HCT116 (cell line): ENCODE measurements at regions of chr22 and their contacts with region 1.

Region 1: DNA sequence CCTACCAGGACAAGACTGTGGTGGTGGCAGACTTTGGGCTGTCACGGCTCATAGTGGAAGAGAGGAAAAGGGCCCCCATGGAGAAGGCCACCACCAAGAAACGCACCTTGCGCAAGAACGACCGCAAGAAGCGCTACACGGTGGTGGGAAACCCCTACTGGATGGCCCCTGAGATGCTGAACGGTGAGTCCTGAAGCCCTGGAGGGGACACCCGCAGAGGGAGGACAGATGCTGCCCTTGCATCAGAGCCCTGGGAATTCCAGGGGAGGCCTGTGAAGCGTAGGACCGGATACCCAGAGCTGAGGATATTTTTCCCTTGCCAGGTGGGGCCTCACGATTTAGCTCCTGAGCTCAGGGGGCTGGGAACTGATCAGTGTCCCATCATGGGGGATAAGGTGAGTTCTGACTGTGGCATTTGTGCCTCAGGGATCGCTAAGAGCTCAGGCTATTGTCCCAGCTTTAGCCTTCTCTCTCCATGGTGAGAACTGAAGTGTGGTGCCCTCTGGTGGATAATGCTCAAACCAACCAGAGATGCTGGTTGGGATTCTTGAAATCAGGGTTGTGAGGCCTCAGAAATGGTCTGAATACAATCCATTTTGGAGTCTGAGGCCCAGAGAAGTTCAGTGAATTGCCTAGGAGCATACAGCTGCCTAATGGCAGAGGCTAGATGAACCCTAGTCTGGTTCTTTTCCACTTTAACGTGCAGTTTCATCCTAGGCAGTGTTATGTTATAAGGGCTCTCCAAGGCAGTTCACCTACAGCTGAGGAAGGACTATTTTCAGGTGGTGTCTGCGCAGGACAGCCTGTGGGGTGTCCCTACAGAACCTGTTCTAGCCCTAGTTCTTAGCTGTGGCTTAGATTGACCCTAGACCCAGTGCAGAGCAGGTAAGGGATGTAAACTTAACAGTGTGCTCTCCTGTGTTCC is 19.5 kb downstream of the PIK3IP1 start:
- DNase-seq: peak; percentile 32
- ATAC-seq: peak; percentile 88
- H3K4me3 ChIP-seq: no peak overlapping the region
- H3K27ac ChIP-seq: 0 out of 2 replicates have a peak overlapping the region, but pooled peaks have one; percentile 22
- H3K4me1 ChIP-seq: no peaks in the 10 kb centered on the region
- H3K27me3 ChIP-seq: no peaks in the 10 kb centered on the region
- CTCF ChIP-seq: peak; percentile 69 to 80 (median 77)
- POLR2A ChIP-seq: no peak
- RAD21 ChIP-seq: peak; percentile 76

Region 2: GRCh38 chr22:31211862-31212730 is 60.7 kb before region 1 on chr22 and contains the start of gene LIMK2:
- CTCF ChIA-PET with region 1: interaction called, 9 read pairs
- POLR2A ChIA-PET with region 1: no interaction called
- RAD21 ChIA-PET with region 1: interaction called, 3 read pairs
- intact Hi-C with region 1: loop called (anchors 5 kb)
- DNase-seq: peak; percentile 76
- ATAC-seq: peak; percentile 98
- H3K4me3 ChIP-seq: peak within 1 kb of the TSS; percentile 77 to 97
- H3K27ac ChIP-seq: peak within 1 kb of the TSS; percentile 73
- H3K4me1 ChIP-seq: peaks cover 11 to 15% of the 10 kb centered on the region in 2 experiments; a peak in 3 of 4 replicates
- H3K27me3 ChIP-seq: no peaks in the 10 kb centered on the region
- CTCF ChIP-seq: peak; percentile 79 to 84 (median 82)
- POLR2A ChIP-seq: no peak
- RAD21 ChIP-seq: peak; percentile 77
- total RNA-seq, gene LIMK2: 21.9 TPM

Region 3: DNA sequence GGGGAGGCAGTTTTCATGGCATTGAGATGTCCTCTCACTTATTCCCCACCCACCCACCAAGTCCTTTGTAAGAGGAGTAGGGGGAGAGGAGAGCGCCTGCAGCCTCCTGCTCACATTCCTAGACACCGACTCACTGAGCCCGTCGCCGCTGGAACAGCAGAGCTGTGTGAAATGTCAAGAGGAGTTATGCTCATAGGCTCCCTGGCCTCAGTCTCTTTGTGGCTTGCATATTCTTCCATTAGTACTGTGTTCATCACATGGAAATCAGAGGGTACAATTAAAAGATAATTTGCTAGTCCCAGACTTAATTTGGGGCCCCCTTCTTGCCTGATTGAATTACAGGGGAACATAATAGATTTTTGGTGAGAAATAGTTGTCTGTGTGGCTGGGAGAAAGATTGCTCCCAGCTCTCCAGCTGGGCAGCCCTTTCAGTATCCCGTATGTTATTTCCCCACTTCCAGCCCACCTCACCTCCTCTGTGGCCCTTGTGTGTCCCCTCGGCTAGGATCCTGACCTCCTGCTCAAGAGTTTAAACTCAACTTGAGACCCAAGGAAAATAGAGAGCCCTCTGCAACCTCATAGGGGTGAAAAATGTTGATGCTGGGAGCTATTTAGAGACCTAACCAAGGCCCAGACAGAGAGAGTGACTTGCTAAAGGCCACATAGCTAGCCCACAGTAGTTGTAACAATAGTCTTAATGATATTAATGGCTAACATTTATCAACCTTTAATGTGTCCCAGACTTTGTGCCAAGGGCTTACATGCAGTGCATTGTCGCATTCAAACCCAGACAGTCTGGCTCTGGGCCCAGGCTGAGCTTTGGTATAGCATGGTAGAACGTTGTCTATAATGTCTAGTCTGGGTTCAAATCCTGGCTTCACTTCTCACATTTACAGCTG is 28.5 kb before region 1 on chr22:
- CTCF ChIA-PET with region 1: interaction called, 11 read pairs
- POLR2A ChIA-PET with region 1: interaction called, 3 read pairs
- RAD21 ChIA-PET with region 1: interaction called in 1 of 2 experiments, 3 read pairs
- intact Hi-C with region 1: no loop called
- DNase-seq: peak; percentile 33
- ATAC-seq: peak; percentile 85
- H3K4me3 ChIP-seq: peak overlapping the region; percentile 37 to 46
- H3K27ac ChIP-seq: peak overlapping the region; percentile 60
- H3K4me1 ChIP-seq: peaks cover 47 to 60% of the 10 kb centered on the region in 2 experiments
- H3K27me3 ChIP-seq: no peaks in the 10 kb centered on the region
- CTCF ChIP-seq: no peak
- POLR2A ChIP-seq: no peak
- RAD21 ChIP-seq: no peak

Region 4: DNA sequence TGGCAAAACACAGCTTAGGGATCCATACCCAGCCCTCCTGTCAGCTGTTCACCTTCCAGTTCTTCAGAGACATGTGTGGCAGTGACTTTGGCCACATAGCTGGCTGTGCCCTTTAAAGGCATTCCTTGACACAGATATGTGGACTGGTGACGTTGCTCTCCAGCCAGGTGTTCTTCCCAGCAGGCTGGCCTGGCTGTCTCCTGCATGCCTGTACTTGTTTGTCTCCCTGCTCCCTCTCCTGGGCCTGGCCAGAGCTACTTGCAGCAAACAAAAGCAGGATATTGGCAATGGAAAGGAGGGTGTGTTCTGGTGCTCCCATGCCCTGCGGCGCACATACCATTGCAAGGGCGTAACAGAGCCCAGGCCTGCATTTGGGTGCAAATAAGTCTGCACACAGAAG is 18.8 kb before region 1 on chr22:
- CTCF ChIA-PET with region 1: interaction called, 13 read pairs
- POLR2A ChIA-PET with region 1: no interaction called
- RAD21 ChIA-PET with region 1: no interaction called
- intact Hi-C with region 1: no loop called
- DNase-seq: no peak
- ATAC-seq: peak; percentile 78
- H3K4me3 ChIP-seq: no peak overlapping the region
- H3K27ac ChIP-seq: peak overlapping the region; percentile 34
- H3K4me1 ChIP-seq: peaks cover 15% of the 10 kb centered on the region in 2 experiments
- H3K27me3 ChIP-seq: no peaks in the 10 kb centered on the region
- CTCF ChIP-seq: 0 out of 6 replicates have a peak, but pooled peaks of 1 of the 3 experiments have one; percentile 2
- POLR2A ChIP-seq: no peak
- RAD21 ChIP-seq: no peak; the same call in 1 of the 2 replicates

Region 5: GRCh38 chr22:31284281-31285155 is 11.7 kb after region 1 on chr22:
- CTCF ChIA-PET with region 1: interaction called, 11 read pairs
- POLR2A ChIA-PET with region 1: interaction called, 7 read pairs
- RAD21 ChIA-PET with region 1: no interaction called
- intact Hi-C with region 1: no loop called
- DNase-seq: no peak
- ATAC-seq: no peak
- H3K4me3 ChIP-seq: no peak overlapping the region
- H3K27ac ChIP-seq: no peak overlapping the region
- H3K4me1 ChIP-seq: peaks cover 5 to 11% of the 10 kb centered on the region in 2 experiments; a peak in 3 of 4 replicates
- H3K27me3 ChIP-seq: no peaks in the 10 kb centered on the region
- CTCF ChIP-seq: no peak
- POLR2A ChIP-seq: no peak
- RAD21 ChIP-seq: no peak

Region 6: DNA sequence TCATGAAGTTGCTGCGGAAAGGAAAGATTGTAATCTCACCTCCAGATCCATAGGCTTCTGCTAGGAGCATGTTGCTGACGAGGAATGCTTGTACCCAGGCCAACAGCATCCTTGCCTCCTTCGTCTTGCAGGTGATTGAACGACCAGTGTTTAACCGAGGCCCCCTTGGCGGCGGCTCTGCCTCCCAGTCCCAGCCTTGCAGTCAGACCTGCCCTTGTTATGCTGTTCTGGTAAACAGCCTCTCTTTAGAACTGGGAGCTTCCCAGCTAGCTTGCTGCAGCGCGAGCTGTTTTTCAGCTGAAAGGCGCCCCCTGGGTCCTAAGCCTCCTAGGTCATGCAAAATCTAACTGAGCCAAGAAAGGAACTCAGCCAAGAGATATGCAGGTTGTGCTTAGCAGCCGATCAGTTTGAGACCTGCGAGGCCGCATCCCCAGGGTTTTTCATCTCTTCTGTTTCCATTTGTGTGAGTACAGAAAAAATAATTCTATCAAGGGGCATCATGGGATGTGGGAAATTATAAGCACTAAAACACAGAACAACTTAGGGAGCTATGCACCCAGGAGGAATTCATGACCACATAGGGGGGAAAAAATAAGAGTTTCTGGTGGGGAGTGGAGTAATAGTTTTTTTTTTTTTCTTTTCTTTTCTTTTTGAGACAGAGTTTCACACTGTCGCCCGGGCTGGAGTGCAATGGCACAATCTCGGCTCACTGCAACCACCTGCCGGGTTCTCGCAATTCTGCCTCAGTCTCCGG is 19.6 kb after region 1 on chr22 and contains the start of gene PIK3IP1:
- CTCF ChIA-PET with region 1: interaction called, 10 read pairs
- POLR2A ChIA-PET with region 1: no interaction called
- RAD21 ChIA-PET with region 1: no interaction called
- intact Hi-C with region 1: no loop called
- DNase-seq: peak; percentile 51
- ATAC-seq: peak; percentile 63
- H3K4me3 ChIP-seq: no peak within 1 kb of the TSS
- H3K27ac ChIP-seq: no peak within 1 kb of the TSS; the same call in 1 of the 2 replicates
- H3K4me1 ChIP-seq: peaks cover 27 to 44% of the 10 kb centered on the region in 2 experiments
- H3K27me3 ChIP-seq: no peaks in the 10 kb centered on the region
- CTCF ChIP-seq: peak; percentile 18 to 31 (median 20); a peak in 1 of 6 replicates
- POLR2A ChIP-seq: no peak
- RAD21 ChIP-seq: peak; percentile 45
- total RNA-seq, gene PIK3IP1: 1.6 TPM